ENCODE measurements at regions of chr2 and their contacts with region 1.

Region 1: DNA sequence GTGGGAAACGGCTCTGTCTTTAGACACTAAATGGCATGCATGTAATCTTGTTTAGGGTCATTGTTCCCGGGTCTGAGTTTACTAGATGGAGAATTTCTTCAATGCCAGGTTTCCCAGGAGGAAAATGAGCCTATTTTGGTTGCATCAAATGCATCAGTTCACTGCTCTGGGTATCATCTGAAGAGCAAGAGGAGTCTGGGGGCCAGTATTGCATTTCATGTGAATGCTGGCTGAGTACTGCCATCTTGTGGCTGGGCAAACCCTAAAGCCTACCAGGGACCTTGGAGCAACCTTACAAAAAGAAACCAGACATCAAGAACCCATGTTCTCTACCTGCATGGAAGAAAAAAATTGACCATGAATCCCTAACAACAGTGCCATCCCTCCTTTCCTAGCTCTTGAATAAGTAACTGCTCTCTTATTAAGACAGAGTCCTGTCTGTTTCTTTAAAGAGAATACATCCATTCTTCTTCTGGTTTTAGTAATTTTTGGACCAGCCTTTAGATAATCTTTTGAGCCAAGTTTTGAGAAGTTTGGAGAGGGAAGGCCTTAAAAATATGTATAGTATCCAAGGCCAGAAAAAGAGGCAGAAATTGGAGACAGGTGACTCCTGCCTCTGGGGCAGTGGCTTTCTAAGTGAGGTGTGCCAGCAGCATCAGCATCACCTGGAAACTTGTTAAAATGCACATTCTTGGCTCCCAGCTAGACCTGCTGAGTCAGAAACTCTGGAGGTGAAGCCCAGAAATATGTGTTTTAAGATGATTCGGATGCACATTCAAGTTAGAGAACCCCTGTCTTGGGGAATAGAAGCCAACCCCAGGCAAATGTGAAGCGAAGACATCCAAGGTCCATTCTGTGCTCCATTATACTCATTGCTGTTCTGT is 261.0 kb upstream of the CXCR4 start:
- DNase-seq: peak; percentile 87
- H3K4me3 Mint-ChIP-seq: no peak overlapping the region
- H3K27ac Mint-ChIP-seq: no peak overlapping the region
- H3K4me1 Mint-ChIP-seq: peaks cover 83% of the 10 kb centered on the region
- H3K27me3 Mint-ChIP-seq: no peaks in the 10 kb centered on the region

Region 2: GRCh38 chr2:135913727-135914365 is 465.1 kb before region 1 on chr2:
- CTCF ChIA-PET with region 1: interaction called, 98 read pairs
- DNase-seq: peak; percentile 53
- H3K4me3 Mint-ChIP-seq: no peak overlapping the region
- H3K27ac Mint-ChIP-seq: peak overlapping the region; percentile 11
- H3K4me1 Mint-ChIP-seq: peaks cover 13% of the 10 kb centered on the region
- H3K27me3 Mint-ChIP-seq: no peaks in the 10 kb centered on the region

Region 3: DNA sequence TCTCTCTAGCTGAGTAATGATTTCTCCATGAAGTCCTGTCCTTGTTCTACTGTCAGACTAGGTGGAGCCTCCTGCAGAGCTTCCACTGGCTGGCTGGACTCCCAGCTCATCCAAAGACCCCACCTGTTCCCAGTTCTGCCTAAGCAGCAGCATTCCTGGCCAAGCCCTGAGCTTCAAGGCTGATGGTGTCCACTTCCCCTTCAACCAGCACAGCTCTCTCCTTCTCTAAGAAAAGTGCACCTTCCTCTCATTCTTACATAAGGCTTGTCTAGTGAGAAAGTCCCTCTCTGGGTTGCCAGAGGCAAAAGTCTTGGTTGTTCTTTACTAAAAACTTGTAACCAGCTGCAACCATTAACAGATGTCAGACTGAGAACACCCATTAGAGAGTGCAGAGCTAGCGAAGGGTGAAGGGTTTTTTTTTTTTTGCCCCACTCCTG is 319.9 kb before region 1 on chr2:
- CTCF ChIA-PET with region 1: interaction called, 14 read pairs
- DNase-seq: no peak
- H3K4me3 Mint-ChIP-seq: no peak overlapping the region
- H3K27ac Mint-ChIP-seq: peak overlapping the region; percentile 69
- H3K4me1 Mint-ChIP-seq: peaks cover 90% of the 10 kb centered on the region
- H3K27me3 Mint-ChIP-seq: no peaks in the 10 kb centered on the region

Region 4: GRCh38 chr2:136131961-136132824 is 246.8 kb before region 1 on chr2:
- CTCF ChIA-PET with region 1: interaction called, 16 read pairs
- DNase-seq: peak; percentile 85
- H3K4me3 Mint-ChIP-seq: peak overlapping the region; percentile 72
- H3K27ac Mint-ChIP-seq: peak overlapping the region; percentile 99
- H3K4me1 Mint-ChIP-seq: peaks cover 99% of the 10 kb centered on the region
- H3K27me3 Mint-ChIP-seq: peaks cover 26% of the 10 kb centered on the region

Region 5: GRCh38 chr2:136191041-136191440 is 187.9 kb before region 1 on chr2:
- CTCF ChIA-PET with region 1: no interaction called
- DNase-seq: no peak
- H3K4me3 Mint-ChIP-seq: no peak overlapping the region
- H3K27ac Mint-ChIP-seq: no peak overlapping the region
- H3K4me1 Mint-ChIP-seq: no peaks in the 10 kb centered on the region
- H3K27me3 Mint-ChIP-seq: no peaks in the 10 kb centered on the region

Measured in activated naive CD4-positive, alpha-beta T cell treated with anti-CD3 and anti-CD28 coated beads, Interleukin-2, amount 10 ng/mL, durations not matched to agents 7 days and 5 days (primary cell).